ENCODE measurements at regions of chr3 and their contacts with region 1.

Region 1: GRCh38 chr3:30319713-30320112 is 286.7 kb upstream of the TGFBR2 start:
- DNase-seq: peak; percentile 60
- ATAC-seq: peak; percentile 99
- H3K4me3 Mint-ChIP-seq: no peak overlapping the region
- H3K27ac Mint-ChIP-seq: no peak overlapping the region
- H3K4me1 Mint-ChIP-seq: peaks cover 14% of the 10 kb centered on the region
- H3K27me3 Mint-ChIP-seq: no peaks in the 10 kb centered on the region
- CTCF ChIP-seq: peak; percentile 61

Region 2: DNA sequence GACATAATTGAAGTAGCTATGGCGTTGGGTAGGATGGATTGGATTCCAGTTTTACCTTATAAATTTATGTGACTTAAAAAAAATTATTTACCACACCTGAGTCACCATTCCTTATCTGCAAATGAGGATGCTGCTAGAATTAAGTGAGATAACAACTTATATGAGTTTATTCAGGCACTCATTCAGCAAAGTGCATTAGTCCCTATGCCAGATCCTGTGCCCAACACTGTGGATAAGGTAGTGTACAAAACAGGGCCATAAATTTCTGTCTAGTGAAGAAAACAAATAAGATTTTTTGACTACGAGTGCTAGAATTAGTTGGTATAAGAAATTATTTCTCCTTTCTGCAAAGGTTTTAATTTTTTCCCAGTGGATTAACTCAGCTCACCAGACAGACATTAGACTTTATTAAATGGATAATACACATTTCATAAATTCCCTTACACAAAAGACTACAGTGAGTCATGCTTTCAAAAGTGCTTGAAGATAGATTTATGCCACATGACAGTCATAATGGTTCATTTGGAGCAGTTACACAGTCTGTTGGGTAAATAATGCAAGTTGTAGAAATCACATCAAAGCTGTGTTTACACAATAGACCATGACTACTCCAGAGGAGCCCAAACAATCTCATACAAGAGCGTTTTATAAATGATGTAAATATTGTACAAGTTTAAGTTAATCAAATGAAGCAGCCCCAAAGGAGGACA is 156.8 kb after region 1 on chr3:
- CTCF ChIA-PET with region 1: interaction called, 10 read pairs
- POLR2A ChIA-PET with region 1: no interaction called
- intact Hi-C with region 1: no loop called
- DNase-seq: no peak
- ATAC-seq: peak; percentile 59
- H3K4me3 Mint-ChIP-seq: no peak overlapping the region
- H3K27ac Mint-ChIP-seq: no peak overlapping the region
- H3K4me1 Mint-ChIP-seq: peaks cover 46% of the 10 kb centered on the region
- H3K27me3 Mint-ChIP-seq: no peaks in the 10 kb centered on the region
- CTCF ChIP-seq: no peak